CD8-positive, alpha-beta T cell (primary cell): ENCODE measurements at regions of chr7 and their contacts with region 1.

Region 1: GRCh38 chr7:45111298-45112223 is at the start of gene TBRG4:
- DNase-seq: peak; percentile 84 to 98 (median 94)
- ATAC-seq: peak; percentile 83
- H3K4me3 ChIP-seq: peak within 1 kb of the TSS; percentile 67 to 96
- H3K4me3 Mint-ChIP-seq: peak within 1 kb of the TSS; percentile 90
- H3K27ac ChIP-seq: peak within 1 kb of the TSS; percentile 94 to 99
- H3K27ac Mint-ChIP-seq: peak within 1 kb of the TSS; percentile 97
- H3K4me1 ChIP-seq: peaks cover 48% of the 10 kb centered on the region
- H3K4me1 Mint-ChIP-seq: peaks cover 48% of the 10 kb centered on the region
- H3K27me3 ChIP-seq: no peaks in the 10 kb centered on the region
- H3K27me3 Mint-ChIP-seq: no peaks in the 10 kb centered on the region
- CTCF ChIP-seq: no peak
- total RNA-seq, gene TBRG4: 75.3 to 79.7 TPM

Region 2: DNA sequence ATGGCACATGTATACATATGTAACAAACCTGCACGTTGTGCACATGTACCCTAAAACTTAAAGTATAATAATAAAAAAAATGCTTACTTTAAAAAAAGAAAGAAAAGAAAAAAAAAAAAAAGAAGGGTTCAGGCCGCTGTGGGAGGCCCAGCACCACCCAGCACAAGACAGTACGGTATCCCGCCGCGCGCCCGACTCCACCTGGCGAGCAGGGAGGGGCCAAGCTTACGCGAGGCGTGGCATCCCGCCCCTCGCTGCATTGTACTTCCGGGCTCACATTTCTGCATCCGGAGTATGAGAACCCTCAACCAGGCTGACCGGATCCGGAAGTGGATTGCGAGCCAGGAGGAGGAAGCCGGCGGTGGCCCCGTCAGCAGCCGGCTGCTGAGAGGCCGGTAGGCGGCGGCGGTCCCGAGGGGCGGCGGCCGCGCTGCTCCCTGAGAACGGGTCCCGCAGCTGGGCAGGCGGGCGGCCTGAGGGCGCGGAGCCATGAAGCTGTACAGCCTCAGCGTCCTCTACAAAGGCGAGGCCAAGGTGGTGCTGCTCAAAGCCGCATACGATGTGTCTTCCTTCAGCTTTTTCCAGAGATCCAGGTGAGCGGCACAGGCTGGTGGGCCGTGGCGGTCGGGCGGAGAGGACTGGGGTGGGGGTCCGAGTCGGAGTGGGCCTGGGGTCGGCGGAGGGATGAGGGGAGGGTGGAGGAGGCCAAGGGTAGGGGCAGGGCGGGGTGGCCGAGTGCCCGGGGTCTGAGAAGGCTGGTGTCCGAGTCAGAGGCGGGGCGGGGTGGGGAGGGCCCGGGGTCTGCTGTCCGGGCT is 910.7 kb before region 1 on chr7 and contains the start of gene YKT6:
- CTCF ChIA-PET with region 1: no interaction called
- POLR2A ChIA-PET with region 1: no interaction called
- intact Hi-C with region 1: loop called in 1 of 2 experiments (anchors 5 kb)
- DNase-seq: peak; percentile 84 to 98 (median 95)
- ATAC-seq: peak; percentile 98
- H3K4me3 ChIP-seq: peak within 1 kb of the TSS; percentile 72 to 97
- H3K4me3 Mint-ChIP-seq: peak within 1 kb of the TSS; percentile 81
- H3K27ac ChIP-seq: peak within 1 kb of the TSS; percentile 65 to 78
- H3K27ac Mint-ChIP-seq: peak within 1 kb of the TSS; percentile 80
- H3K4me1 ChIP-seq: peaks cover 13% of the 10 kb centered on the region
- H3K4me1 Mint-ChIP-seq: peaks cover 34% of the 10 kb centered on the region
- H3K27me3 ChIP-seq: no peaks in the 10 kb centered on the region
- H3K27me3 Mint-ChIP-seq: peaks cover 5% of the 10 kb centered on the region
- CTCF ChIP-seq: peak; percentile 43
- total RNA-seq, gene YKT6: 111 to 114 TPM

Region 3: DNA sequence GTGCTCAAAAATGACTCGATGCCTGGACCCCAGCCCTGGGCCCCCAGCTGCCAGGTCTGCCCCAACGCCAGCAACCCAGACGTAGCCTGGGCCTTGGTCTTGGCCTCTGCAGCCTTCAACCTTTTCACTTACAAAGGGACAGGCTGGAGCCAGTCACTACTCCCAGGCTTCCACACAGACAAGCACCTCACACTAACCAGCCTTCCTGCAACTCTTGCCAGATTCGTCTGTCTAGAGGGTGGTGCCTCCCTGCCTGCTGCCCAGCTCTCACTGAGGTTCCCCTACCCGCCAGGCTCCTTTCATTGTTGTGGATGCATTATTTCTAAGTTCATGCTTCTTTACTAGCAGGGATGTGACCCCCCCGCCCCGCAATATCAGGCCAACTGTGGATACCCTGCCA is 677.4 kb before region 1 on chr7:
- CTCF ChIA-PET with region 1: no interaction called
- POLR2A ChIA-PET with region 1: no interaction called
- intact Hi-C with region 1: no loop called
- DNase-seq: no peak
- ATAC-seq: no peak
- H3K4me3 ChIP-seq: no peak overlapping the region
- H3K4me3 Mint-ChIP-seq: no peak overlapping the region
- H3K27ac ChIP-seq: no peak overlapping the region
- H3K27ac Mint-ChIP-seq: peak overlapping the region; percentile 3
- H3K4me1 ChIP-seq: peaks cover 5% of the 10 kb centered on the region
- H3K4me1 Mint-ChIP-seq: peaks cover 59% of the 10 kb centered on the region
- H3K27me3 ChIP-seq: no peaks in the 10 kb centered on the region
- H3K27me3 Mint-ChIP-seq: no peaks in the 10 kb centered on the region
- CTCF ChIP-seq: no peak

Region 4: GRCh38 chr7:44748045-44748947 is 363.3 kb before region 1 on chr7 and contains the start of gene ZMIZ2:
- CTCF ChIA-PET with region 1: no interaction called
- POLR2A ChIA-PET with region 1: interaction called, 3 read pairs
- intact Hi-C with region 1: loop called in 1 of 2 experiments (anchors 5 kb)
- DNase-seq: peak; percentile 84 to 98 (median 92)
- ATAC-seq: peak; percentile 91
- H3K4me3 ChIP-seq: peak within 1 kb of the TSS; percentile 77 to 80
- H3K4me3 Mint-ChIP-seq: peak within 1 kb of the TSS; percentile 79
- H3K27ac ChIP-seq: peak within 1 kb of the TSS; percentile 83
- H3K27ac Mint-ChIP-seq: peak within 1 kb of the TSS; percentile 90
- H3K4me1 ChIP-seq: peaks cover 27% of the 10 kb centered on the region
- H3K4me1 Mint-ChIP-seq: peaks cover 35% of the 10 kb centered on the region
- H3K27me3 ChIP-seq: no peaks in the 10 kb centered on the region
- H3K27me3 Mint-ChIP-seq: no peaks in the 10 kb centered on the region
- CTCF ChIP-seq: no peak
- total RNA-seq, gene ZMIZ2: 67.1 to 71.3 TPM

Region 5: GRCh38 chr7:44973610-44974401 is 137.8 kb before region 1 on chr7:
- CTCF ChIA-PET with region 1: interaction called, 3 read pairs
- POLR2A ChIA-PET with region 1: interaction called, 19 read pairs
- intact Hi-C with region 1: loop called in 1 of 2 experiments (anchors 1 kb)
- DNase-seq: peak in 8 of 9 experiments; percentile 47 to 72 (median 67)
- ATAC-seq: peak; percentile 19
- H3K4me3 ChIP-seq: no peak overlapping the region
- H3K4me3 Mint-ChIP-seq: no peak overlapping the region
- H3K27ac ChIP-seq: no peak overlapping the region
- H3K27ac Mint-ChIP-seq: peak overlapping the region; percentile 66
- H3K4me1 ChIP-seq: peaks cover 36% of the 10 kb centered on the region
- H3K4me1 Mint-ChIP-seq: peaks cover 44% of the 10 kb centered on the region
- H3K27me3 ChIP-seq: no peaks in the 10 kb centered on the region
- H3K27me3 Mint-ChIP-seq: no peaks in the 10 kb centered on the region
- CTCF ChIP-seq: peak; percentile 59

Region 6: DNA sequence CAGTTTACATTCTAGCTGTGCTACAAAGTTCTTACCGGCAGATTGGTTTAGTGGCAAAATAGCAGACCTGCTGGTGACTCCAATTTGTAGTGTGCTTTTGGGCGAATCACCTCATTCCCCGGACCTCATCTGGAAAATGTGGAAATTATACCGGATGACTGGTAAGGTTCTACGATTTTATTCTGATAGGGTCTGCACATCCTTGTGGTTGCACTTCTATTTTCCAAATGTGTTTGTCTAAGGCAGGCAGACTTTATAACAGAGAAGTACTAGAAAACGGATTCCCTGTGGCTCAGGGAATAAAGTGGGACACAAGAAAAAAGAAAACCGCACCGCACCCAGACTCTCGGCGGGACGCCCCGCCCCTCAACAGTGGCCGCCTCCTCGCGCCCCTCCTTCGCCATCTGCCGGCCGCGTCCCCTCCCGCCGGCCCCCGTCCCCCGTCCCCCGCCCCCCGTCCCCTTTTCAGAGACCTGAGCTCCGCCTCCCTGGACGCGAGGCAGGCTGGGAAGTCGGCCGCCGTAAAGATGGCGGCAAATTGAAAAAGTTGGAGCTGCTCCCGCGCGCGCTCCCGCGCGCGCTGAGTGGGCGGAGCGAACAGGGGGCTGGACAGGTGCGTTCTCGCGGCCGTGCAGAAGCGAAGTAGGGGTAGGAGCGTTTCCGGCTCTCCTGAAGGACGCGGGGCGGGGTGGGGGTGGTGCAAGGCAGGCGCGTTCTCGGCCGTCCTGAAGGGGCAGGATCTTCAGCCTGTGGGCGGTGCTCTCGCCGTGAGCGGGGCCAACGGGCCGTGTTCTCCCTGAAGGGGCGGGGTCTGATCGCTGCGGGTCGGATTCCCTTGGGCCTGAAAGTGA is 112.1 kb before region 1 on chr7:
- CTCF ChIA-PET with region 1: no interaction called
- POLR2A ChIA-PET with region 1: interaction called, 6 read pairs
- intact Hi-C with region 1: loop called (anchors 1 kb)
- DNase-seq: peak; percentile 97 to 99 (median 99)
- ATAC-seq: peak; percentile 81
- H3K4me3 ChIP-seq: peak overlapping the region; percentile 59 to 75
- H3K4me3 Mint-ChIP-seq: peak overlapping the region; percentile 99
- H3K27ac ChIP-seq: peak overlapping the region; percentile 70
- H3K27ac Mint-ChIP-seq: peak overlapping the region; percentile 98
- H3K4me1 ChIP-seq: peaks cover 36% of the 10 kb centered on the region
- H3K4me1 Mint-ChIP-seq: peaks cover 51% of the 10 kb centered on the region
- H3K27me3 ChIP-seq: no peaks in the 10 kb centered on the region
- H3K27me3 Mint-ChIP-seq: no peaks in the 10 kb centered on the region
- CTCF ChIP-seq: no peak

Region 7: GRCh38 chr7:45136106-45137060 is 24.8 kb after region 1 on chr7:
- CTCF ChIA-PET with region 1: interaction called, 16 read pairs
- POLR2A ChIA-PET with region 1: interaction called, 4 read pairs
- intact Hi-C with region 1: loop called in 1 of 2 experiments (anchors 2 kb)
- DNase-seq: peak; percentile 41 to 89 (median 66)
- ATAC-seq: peak; percentile 97
- H3K4me3 ChIP-seq: no peak overlapping the region
- H3K4me3 Mint-ChIP-seq: no peak overlapping the region
- H3K27ac ChIP-seq: no peak overlapping the region
- H3K27ac Mint-ChIP-seq: no peak overlapping the region
- H3K4me1 ChIP-seq: peaks cover 3% of the 10 kb centered on the region
- H3K4me1 Mint-ChIP-seq: peaks cover 4% of the 10 kb centered on the region
- H3K27me3 ChIP-seq: no peaks in the 10 kb centered on the region
- H3K27me3 Mint-ChIP-seq: peaks cover 4% of the 10 kb centered on the region
- CTCF ChIP-seq: peak; percentile 92